ENCODE measurements at regions of chr1 and their contacts with region 1.

Region 1: GRCh38 chr1:203172128-203173010 is 3.3 kb downstream of the MYBPH start:
- DNase-seq: peak; percentile 74 to 91
- ATAC-seq: peak; percentile 65 to 86 (median 74)
- H3K4me3 ChIP-seq: peak overlapping the region; percentile 23
- H3K27ac ChIP-seq: peak overlapping the region; percentile 89
- H3K4me1 ChIP-seq: peaks cover 45% of the 10 kb centered on the region
- H3K27me3 ChIP-seq: no peaks in the 10 kb centered on the region
- CTCF ChIP-seq: peak; percentile 93

Region 2: DNA sequence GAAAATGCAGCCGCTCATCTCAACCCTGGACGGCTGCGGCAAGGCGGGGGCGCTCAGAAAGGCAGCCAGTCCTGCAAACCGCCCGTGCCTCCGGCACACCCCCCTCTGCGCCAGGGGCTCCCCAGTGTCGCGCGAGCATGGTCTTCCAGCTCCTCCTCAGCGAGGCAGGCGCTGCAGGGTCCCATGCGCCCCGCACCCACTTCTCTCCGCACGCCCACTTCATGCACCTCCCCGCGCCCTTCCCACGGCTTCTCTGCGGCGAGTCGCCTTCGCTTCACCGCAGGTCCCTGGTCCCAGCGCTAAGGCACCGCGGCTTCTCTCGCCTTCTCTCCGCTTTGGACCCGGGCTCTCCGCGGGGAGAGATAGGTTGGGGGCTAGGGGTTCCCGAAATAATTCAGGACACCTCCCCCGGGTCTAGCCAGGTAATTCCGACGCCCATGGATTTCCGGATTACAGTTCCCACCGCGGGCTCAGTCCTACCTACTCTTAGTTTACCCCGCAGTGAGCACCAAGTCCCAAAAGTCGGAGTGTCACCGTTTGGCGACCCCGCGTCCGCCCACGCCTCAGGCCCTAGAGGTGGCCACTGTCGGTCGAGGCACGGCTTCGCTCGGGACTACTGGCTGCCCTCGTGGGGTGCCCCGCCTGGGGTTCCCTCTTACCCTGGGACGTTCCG is 529.6 kb before region 1 on chr1:
- intact Hi-C with region 1: no loop called
- DNase-seq: no peak
- ATAC-seq: peak in 3 of 4 donors; percentile 25 to 50 (median 33)
- H3K4me3 ChIP-seq: peak overlapping the region; percentile 55
- H3K27ac ChIP-seq: no peak overlapping the region
- H3K4me1 ChIP-seq: peaks cover 5% of the 10 kb centered on the region
- H3K27me3 ChIP-seq: peaks cover 0 to 51% (median 16%) of the 10 kb centered on the region in 3 donors
- CTCF ChIP-seq: no peak

Region 3: DNA sequence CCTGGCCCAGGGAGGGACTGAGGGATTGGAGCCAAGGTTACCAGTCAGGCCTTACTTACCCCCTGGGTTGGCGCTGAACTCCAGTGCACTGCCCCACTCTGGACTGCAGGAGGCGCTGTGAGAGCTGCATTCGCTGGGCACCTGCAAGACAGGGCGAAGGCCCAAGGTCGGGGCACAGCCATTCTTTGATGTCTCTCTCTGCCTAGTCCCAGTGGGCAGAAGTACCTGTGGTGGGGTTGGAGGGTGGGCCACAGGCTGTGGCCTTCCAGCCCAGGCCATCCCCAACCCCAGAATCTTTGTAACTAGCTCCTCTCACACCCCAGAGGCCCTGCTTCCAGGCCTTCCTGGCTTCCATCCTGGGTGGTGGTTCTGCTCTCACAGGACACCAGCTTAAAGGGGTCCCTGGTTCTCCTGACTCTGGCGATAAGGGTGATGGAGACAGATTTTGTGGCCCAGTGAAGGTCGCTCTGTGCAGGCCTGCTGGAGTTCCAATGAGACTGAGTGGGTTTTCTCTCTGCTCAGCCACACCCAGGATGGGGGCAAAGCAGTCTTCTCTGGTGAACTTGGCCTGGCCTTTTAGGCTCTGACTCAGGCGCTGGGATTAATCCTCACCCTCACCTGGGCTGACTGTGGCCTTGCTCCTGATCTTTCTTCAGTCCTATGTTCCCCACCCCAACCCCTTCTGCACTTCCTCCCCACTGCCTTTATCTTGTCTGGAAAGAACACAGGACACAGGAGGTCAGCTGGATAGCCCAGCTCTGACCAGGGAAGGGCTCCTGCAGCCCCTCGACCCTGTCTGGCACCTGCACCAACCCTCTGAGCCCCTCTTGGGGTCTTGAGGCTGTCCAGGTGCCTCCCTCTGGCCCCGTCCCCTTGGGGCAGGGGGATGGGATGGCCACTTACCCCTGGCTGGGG is 87.5 kb before region 1 on chr1:
- intact Hi-C with region 1: loop called in 1 of 2 experiments (anchors 2 kb)
- DNase-seq: peak; percentile 68 to 87
- ATAC-seq: peak; percentile 58 to 79 (median 70)
- H3K4me3 ChIP-seq: peak overlapping the region; percentile 99
- H3K27ac ChIP-seq: peak overlapping the region; percentile 97
- H3K4me1 ChIP-seq: peaks cover 27% of the 10 kb centered on the region
- H3K27me3 ChIP-seq: no peaks in the 10 kb centered on the region
- CTCF ChIP-seq: peak; percentile 79

Region 4: GRCh38 chr1:203127666-203128430 is 44.5 kb before region 1 on chr1 and contains the start of gene ADORA1:
- intact Hi-C with region 1: loop called (anchors 2 to 5 kb)
- DNase-seq: peak; percentile 64 to 76
- ATAC-seq: peak; percentile 82 to 96 (median 90)
- H3K4me3 ChIP-seq: peak within 1 kb of the TSS; percentile 73
- H3K27ac ChIP-seq: peak within 1 kb of the TSS; percentile 64
- H3K4me1 ChIP-seq: peaks cover 42% of the 10 kb centered on the region
- H3K27me3 ChIP-seq: peaks cover 0 to 8% (median 2%) of the 10 kb centered on the region in 3 donors
- CTCF ChIP-seq: no peak
- total RNA-seq, gene ADORA1: 1.2 to 10.4 (median 6.1) TPM

Region 5: DNA sequence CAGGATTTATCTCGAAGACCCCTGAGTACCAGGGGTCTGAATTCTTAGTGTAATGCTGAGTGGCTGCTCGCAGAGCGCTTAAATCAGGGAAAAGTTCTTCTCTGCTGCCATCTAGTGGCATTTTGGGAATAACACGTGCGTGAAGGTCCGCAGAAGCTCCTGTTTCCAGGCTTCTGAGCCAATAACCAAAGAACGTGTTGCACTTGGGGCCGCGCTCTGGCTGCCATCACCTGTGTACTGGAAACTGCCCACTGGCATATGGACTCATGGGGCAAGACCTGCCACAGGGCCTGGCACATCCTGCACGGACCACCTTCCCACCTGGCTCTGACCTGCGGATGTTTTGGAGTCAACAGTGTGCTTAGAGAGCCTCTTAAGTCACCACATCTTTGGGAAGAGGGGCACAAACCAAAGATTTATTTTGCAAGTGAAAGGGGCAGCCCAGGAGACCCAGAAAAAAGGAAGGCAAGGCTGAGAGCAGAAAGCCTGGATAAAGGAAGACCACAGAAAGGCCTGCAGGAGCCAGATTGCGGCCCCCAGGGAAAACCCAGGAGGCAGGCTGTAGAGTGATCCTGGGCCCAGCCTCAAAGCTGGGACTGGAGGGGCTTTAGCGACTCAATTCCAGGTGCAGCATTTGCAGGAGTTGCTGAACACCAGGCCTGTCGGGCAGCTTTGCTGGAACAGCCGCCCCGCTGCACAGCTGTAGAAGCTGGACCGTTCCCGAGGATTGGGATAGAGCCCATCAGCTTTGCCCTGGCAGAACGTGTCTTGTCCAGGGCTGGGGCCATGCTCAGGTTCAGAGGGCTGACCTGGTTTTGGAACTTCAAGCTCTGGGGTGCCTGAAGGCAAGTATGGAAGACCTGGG is 44.1 kb after region 1 on chr1:
- intact Hi-C with region 1: loop called (anchors 5 kb)
- DNase-seq: peak in 1 of 2 donors; percentile 41
- ATAC-seq: peak; percentile 78 to 94 (median 84)
- H3K4me3 ChIP-seq: no peak overlapping the region
- H3K27ac ChIP-seq: no peak overlapping the region
- H3K4me1 ChIP-seq: peaks cover 12% of the 10 kb centered on the region
- H3K27me3 ChIP-seq: no peaks in the 10 kb centered on the region
- CTCF ChIP-seq: peak; percentile 83